Activated CD8-positive, alpha-beta T cell treated with anti-CD3 and anti-CD28 coated beads for 36 hours (primary cell): ENCODE measurements at regions of chr14 and their contacts with region 1.

Region 1: GRCh38 chr14:50860478-50861086 is 11.3 kb upstream of the ABHD12B start:
- DNase-seq: peak; percentile 97
- ATAC-seq: peak; percentile 79
- H3K4me3 Mint-ChIP-seq: peak overlapping the region; percentile 79
- H3K27ac Mint-ChIP-seq: peak overlapping the region; percentile 78
- H3K4me1 Mint-ChIP-seq: peaks cover 10% of the 10 kb centered on the region
- H3K27me3 Mint-ChIP-seq: no peaks in the 10 kb centered on the region
- CTCF ChIP-seq: peak; percentile 91

Region 2: DNA sequence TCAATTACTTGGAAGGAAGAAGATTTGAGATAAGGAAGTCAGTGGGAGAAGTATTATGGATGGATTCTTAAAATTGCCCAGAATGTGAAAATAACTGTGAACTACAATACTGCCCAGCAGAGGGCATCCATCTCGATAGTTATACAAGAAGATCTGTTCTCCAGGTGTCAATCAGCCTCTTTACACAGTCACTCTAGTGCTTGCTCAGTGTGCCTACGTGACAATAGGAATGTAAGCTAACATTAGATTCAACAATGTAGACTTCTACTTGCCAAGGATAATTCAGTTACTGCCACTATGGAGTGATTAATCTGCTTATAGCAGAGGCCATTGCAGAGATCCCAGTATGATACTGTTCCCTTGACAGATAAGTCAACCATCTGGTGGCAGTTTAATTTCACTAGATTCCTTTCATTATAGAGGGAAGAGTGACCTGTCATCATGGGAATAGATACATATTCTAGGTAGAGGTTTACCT is 317.6 kb before region 1 on chr14:
- CTCF ChIA-PET with region 1: interaction called, 12 read pairs
- POLR2A ChIA-PET with region 1: no interaction called
- intact Hi-C with region 1: no loop called
- DNase-seq: peak; percentile 68
- ATAC-seq: peak; percentile 95
- H3K4me3 Mint-ChIP-seq: no peak overlapping the region
- H3K27ac Mint-ChIP-seq: peak overlapping the region; percentile 64
- H3K4me1 Mint-ChIP-seq: peaks cover 17% of the 10 kb centered on the region
- H3K27me3 Mint-ChIP-seq: peaks cover 1% of the 10 kb centered on the region
- CTCF ChIP-seq: peak; percentile 82

Region 3: DNA sequence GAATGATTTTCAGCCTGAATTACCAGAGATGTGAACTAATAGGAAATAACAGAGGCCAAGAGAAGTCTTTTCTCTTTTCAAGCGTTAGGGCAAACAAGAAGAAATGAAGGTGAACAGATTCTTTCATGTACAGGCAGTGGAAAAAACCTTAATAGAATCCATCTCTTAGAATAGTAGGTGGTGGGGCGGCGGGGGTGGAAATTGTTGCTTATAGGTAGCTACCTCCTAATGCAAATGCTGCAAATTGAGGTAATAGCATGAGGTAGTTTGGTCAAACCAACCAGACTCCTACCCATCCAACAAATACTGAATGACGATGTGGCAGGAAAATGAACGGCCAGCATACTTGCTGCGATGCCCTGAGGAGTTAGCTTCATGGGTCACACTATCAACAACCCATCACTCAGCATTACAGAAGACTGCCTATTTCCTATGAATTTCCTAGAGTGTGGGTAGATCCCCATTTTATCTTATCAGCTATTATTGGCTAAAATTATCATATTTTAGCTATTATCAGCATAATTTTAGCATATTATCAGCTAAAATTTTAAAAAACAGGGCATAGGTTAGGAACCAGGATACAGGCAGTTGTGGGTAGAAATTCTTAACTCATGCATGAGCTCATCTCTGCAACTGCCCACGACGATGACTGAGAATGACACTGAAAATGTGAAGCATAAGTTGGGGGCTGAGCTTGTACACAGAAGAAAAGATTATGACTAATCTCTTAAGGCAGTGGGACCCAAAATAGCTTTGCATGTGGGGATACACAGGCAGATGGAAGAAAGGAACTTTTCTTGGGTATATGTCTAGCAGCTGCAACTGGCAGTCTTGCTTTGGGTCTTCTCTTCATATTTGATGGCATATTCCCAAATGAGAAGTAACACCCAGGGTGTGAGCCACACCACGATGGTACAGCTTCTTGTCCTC is 98.3 kb before region 1 on chr14:
- CTCF ChIA-PET with region 1: interaction called, 26 read pairs
- POLR2A ChIA-PET with region 1: no interaction called
- intact Hi-C with region 1: no loop called
- DNase-seq: peak; percentile 83
- ATAC-seq: peak; percentile 99
- H3K4me3 Mint-ChIP-seq: no peak overlapping the region
- H3K27ac Mint-ChIP-seq: peak overlapping the region; percentile 88
- H3K4me1 Mint-ChIP-seq: peaks cover 44% of the 10 kb centered on the region
- H3K27me3 Mint-ChIP-seq: no peaks in the 10 kb centered on the region
- CTCF ChIP-seq: no peak

Region 4: GRCh38 chr14:50792051-50792477 is 68.5 kb before region 1 on chr14:
- CTCF ChIA-PET with region 1: interaction called, 71 read pairs
- POLR2A ChIA-PET with region 1: interaction called, 20 read pairs
- intact Hi-C with region 1: loop called (anchors 5 kb)
- DNase-seq: peak; percentile 58
- ATAC-seq: peak; percentile 65
- H3K4me3 Mint-ChIP-seq: peak overlapping the region; percentile 62
- H3K27ac Mint-ChIP-seq: peak overlapping the region; percentile 87
- H3K4me1 Mint-ChIP-seq: peaks cover 89% of the 10 kb centered on the region
- H3K27me3 Mint-ChIP-seq: no peaks in the 10 kb centered on the region
- CTCF ChIP-seq: no peak

Region 5: DNA sequence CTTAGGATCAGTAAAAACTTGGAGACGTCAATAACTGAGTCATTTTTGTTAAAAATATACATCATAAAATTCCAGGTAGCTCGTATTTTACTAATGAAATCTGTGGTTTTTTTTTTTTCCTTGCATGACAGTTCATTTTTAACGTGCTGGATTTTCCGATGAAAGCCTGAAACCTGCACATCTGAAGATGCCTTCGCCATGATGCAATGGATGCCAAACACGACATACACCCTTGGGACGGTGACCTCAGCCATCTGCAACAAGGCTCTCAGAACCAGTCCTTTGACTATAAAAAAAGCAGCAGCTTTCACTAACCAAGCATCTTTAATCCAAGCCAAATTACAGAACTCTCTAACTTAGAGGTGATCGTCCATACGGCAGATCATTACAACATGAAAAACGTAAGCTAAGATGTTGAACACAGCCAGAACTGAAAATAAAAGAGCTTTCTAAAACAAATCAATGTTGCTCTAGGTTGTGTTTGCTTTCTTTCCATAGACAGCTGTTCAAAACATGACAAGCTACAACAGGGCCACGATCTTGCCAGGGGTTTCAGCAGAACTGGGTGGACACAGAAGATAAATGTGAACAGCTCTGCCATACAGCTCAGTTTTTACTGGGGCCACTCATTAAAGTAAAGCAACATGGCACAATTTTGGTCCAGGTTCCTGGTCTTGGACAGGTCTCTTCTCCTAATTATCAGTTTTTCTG is 37.4 kb before region 1 on chr14:
- CTCF ChIA-PET with region 1: interaction called, 114 read pairs
- POLR2A ChIA-PET with region 1: interaction called, 5 read pairs
- intact Hi-C with region 1: no loop called
- DNase-seq: peak; percentile 64
- ATAC-seq: peak; percentile 22
- H3K4me3 Mint-ChIP-seq: peak overlapping the region; percentile 71
- H3K27ac Mint-ChIP-seq: peak overlapping the region; percentile 90
- H3K4me1 Mint-ChIP-seq: peaks cover 90% of the 10 kb centered on the region
- H3K27me3 Mint-ChIP-seq: no peaks in the 10 kb centered on the region
- CTCF ChIP-seq: no peak

Region 6: DNA sequence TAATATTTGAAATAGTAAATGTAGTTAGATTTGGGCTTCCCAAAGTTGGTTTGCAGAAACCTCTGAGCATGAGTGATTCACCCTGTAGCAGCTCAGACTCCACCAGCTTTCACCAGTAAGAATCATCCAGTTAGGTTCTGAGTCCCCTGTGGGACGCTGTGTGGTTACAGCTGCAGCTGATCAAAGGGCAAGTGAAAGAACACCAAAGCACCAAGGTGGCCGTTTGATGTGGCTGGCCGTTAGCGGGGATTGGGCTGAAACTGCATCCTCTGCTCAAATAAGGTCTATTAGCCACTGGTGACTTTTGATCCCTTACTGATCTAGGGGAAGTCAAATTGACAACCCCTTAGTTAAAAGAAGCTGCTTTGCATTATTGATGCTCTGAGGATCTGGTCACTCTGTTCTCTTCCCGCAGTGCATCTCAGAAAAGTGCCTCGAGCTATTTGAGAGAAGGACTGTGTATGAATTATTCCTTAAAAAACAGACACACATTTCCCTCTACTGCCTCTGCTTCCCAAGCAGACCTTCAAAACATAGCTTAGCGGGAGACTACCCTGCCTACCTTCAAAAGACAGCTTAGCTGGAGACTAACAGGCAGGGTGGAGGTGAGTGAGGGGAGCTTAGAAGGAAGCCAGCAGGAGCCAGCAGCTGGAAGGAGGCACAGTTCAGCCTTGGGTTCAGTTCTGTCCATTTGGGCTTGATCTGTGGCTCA is 14.9 kb after region 1 on chr14:
- CTCF ChIA-PET with region 1: interaction called, 16 read pairs
- POLR2A ChIA-PET with region 1: no interaction called
- intact Hi-C with region 1: no loop called
- DNase-seq: peak; percentile 93
- ATAC-seq: peak; percentile 96
- H3K4me3 Mint-ChIP-seq: no peak overlapping the region
- H3K27ac Mint-ChIP-seq: no peak overlapping the region
- H3K4me1 Mint-ChIP-seq: peaks cover 42% of the 10 kb centered on the region
- H3K27me3 Mint-ChIP-seq: peaks cover 66% of the 10 kb centered on the region
- CTCF ChIP-seq: no peak